ENCODE measurements at regions of chr11 and their contacts with region 1.

Region 1: GRCh38 chr11:128157423-128158298 is 429.7 kb downstream of the ETS1 start:
- DNase-seq: peak; percentile 79
- ATAC-seq: peak; percentile 93
- H3K4me3 Mint-ChIP-seq: peak overlapping the region; percentile 68
- H3K27ac Mint-ChIP-seq: peak overlapping the region; percentile 83
- H3K4me1 Mint-ChIP-seq: peaks cover 13% of the 10 kb centered on the region
- H3K27me3 Mint-ChIP-seq: peaks cover 12% of the 10 kb centered on the region

Region 2: DNA sequence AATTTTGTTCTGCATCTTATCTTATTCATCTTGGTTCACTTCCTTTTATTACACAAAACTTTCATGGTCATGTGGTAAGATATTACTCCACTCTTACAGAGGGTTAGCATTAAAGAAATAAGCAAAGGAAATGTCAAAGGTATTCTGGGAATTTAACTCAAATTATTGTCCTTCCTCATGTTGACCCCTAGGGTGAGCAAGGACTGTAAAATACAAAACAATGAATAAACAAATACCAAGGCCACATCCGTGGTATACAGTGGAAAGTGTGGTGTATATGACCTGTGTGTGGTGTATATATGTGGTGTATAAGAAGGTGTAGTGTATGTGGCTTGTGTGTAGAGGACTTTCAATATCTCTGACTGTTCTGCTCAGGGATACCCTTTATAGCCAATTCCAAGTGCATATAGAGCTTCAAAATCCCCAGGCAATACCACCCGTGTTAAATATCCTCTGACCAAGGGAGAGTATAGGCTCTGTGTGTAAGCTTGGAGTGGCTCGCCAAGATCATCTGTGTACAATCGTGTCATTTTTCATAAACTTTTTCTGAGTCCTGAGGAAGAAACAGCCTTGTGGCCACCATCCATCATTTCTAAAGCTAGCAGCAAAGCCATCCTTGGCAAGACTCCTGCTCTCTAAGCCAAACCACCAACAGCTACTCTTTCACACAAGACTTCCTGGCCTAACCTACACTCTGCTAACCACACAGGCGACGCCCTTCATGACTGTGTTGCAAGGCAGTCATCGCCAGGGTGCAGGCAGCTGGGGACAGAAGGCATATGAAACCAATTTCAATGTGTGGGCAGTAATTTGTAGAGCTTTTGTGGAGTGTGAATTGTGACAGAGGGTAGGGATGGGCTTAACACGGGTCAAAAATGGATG is 118.3 kb before region 1 on chr11:
- CTCF ChIA-PET with region 1: interaction called, 150 read pairs
- POLR2A ChIA-PET with region 1: interaction called, 5 read pairs
- DNase-seq: peak; percentile 90
- ATAC-seq: peak; percentile 93
- H3K4me3 Mint-ChIP-seq: peak overlapping the region; percentile 66
- H3K27ac Mint-ChIP-seq: peak overlapping the region; percentile 97
- H3K4me1 Mint-ChIP-seq: peaks cover 41% of the 10 kb centered on the region
- H3K27me3 Mint-ChIP-seq: no peaks in the 10 kb centered on the region

Region 3: GRCh38 chr11:128135451-128135850 is 22.2 kb before region 1 on chr11:
- CTCF ChIA-PET with region 1: interaction called, 19 read pairs
- POLR2A ChIA-PET with region 1: no interaction called
- DNase-seq: no peak
- ATAC-seq: no peak
- H3K4me3 Mint-ChIP-seq: no peak overlapping the region
- H3K27ac Mint-ChIP-seq: no peak overlapping the region
- H3K4me1 Mint-ChIP-seq: peaks cover 6% of the 10 kb centered on the region
- H3K27me3 Mint-ChIP-seq: peaks cover 2% of the 10 kb centered on the region

Region 4: DNA sequence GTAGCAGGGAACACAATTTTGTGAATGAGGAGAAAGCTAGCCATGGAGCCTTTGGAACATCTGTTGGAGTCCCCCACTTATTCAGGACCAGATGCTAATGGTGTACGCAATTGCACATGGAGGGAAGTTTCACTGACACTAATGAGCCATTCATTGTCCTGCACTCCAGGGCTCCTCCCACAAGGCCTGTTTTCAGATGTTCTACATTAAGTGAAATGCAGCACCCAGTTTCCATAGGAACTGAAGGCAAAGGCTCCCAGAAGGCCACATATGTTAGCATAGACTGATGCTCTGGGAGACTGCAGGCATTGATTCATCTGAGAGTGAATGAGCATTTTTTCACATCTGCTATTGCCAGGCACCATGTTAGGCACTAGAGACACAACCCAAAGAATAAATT is 30.2 kb after region 1 on chr11:
- CTCF ChIA-PET with region 1: interaction called, 19 read pairs
- POLR2A ChIA-PET with region 1: no interaction called
- DNase-seq: no peak
- ATAC-seq: no peak
- H3K4me3 Mint-ChIP-seq: no peak overlapping the region
- H3K27ac Mint-ChIP-seq: no peak overlapping the region
- H3K4me1 Mint-ChIP-seq: peaks cover 29% of the 10 kb centered on the region
- H3K27me3 Mint-ChIP-seq: no peaks in the 10 kb centered on the region

Region 5: DNA sequence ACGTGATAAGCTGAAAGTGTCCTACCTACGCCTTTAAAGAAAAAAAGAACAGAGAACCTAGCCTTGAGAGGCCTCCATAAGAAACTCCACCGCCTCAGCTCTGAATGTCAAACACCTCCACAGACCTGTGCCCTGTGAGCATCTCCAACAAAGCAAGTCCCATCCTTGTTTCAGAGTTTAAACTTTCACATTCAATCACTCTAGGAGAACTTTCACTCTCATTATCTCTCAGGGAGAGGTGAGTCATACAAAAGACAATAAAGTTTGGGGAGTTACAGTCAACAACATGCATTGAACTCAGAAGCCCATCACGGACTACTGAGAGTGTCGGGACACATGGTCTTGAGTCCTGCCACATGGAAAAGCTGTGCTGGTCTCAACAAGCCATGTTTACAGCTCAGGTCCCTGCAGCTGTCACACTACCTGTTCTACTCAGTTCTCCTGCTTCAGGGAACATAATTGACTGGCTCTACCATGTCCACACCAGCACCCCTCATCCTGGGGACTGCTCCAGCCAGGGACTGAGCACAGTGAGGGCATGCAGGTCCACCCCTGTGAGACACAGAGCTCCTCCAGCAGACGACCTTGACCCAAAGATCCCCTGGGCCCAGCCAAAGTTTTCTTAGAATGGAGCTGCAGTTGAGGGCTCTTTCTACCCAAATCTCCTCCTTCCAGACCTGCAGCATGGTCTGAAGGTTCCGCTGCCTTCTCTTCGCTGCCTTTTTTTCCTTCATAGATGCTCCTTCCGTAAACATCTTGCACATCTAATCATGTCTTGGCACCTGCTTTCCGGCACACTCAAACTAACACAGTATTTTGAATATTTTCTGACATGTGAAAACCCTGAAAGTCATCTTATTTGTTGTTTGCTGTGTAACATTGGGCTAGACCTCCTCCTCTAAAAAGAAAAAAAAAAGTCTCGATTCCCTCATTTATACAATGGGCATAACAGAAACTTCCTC is 314.7 kb after region 1 on chr11:
- CTCF ChIA-PET with region 1: interaction called, 13 read pairs
- POLR2A ChIA-PET with region 1: no interaction called
- DNase-seq: peak; percentile 69
- ATAC-seq: peak; percentile 55
- H3K4me3 Mint-ChIP-seq: peak overlapping the region; percentile 56
- H3K27ac Mint-ChIP-seq: peak overlapping the region; percentile 85
- H3K4me1 Mint-ChIP-seq: peaks cover 98% of the 10 kb centered on the region
- H3K27me3 Mint-ChIP-seq: no peaks in the 10 kb centered on the region

Region 6: GRCh38 chr11:128848815-128849455 is 691.3 kb after region 1 on chr11:
- CTCF ChIA-PET with region 1: interaction called, 61 read pairs
- POLR2A ChIA-PET with region 1: no interaction called
- DNase-seq: peak; percentile 73
- ATAC-seq: peak; percentile 77
- H3K4me3 Mint-ChIP-seq: no peak overlapping the region
- H3K27ac Mint-ChIP-seq: no peak overlapping the region
- H3K4me1 Mint-ChIP-seq: peaks cover 23% of the 10 kb centered on the region
- H3K27me3 Mint-ChIP-seq: no peaks in the 10 kb centered on the region

Measured in activated CD8-positive, alpha-beta T cell treated with anti-CD3 and anti-CD28 coated beads, Interleukin-2, amount 10 ng/mL, durations not matched to agents 7 days and 5 days (primary cell).